ENCODE measurements at regions of chr2 and their contacts with region 1.

Region 1: DNA sequence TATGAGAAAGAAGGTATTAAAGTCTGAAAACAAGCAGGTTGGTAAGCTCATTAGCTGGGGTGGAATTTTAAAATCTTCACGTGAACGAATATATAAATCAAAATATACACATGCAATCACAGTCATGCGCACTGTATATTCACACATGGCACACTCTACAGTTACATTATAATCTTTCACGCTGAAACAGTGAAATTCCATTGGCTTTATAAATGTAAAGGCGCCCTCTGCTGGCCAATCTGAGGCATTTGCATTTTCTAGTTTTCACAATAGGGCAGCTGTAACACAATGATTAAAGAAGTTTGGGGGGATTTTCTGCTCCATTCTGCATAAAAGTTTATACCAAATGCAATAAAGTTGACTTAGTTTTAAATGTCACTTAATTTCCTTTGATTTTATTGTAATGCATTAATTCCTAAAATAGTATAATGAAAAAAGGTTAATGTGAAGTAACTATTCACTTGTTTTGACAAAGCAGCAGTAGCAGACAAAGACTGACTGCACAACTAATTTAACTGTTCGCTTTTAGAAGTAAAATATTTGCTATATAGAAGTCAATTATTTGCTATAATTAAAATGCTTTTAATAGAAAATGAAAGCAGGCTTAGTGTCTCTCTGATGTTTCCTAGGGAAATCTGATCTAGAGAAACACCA is 17.2 kb downstream of the IFIH1 start:
- DNase-seq: peak; percentile 76
- H3K4me3 Mint-ChIP-seq: no peak overlapping the region
- H3K27ac Mint-ChIP-seq: no peak overlapping the region
- H3K4me1 Mint-ChIP-seq: no peaks in the 10 kb centered on the region
- H3K27me3 Mint-ChIP-seq: no peaks in the 10 kb centered on the region
- CTCF ChIP-seq: peak; percentile 65

Region 2: DNA sequence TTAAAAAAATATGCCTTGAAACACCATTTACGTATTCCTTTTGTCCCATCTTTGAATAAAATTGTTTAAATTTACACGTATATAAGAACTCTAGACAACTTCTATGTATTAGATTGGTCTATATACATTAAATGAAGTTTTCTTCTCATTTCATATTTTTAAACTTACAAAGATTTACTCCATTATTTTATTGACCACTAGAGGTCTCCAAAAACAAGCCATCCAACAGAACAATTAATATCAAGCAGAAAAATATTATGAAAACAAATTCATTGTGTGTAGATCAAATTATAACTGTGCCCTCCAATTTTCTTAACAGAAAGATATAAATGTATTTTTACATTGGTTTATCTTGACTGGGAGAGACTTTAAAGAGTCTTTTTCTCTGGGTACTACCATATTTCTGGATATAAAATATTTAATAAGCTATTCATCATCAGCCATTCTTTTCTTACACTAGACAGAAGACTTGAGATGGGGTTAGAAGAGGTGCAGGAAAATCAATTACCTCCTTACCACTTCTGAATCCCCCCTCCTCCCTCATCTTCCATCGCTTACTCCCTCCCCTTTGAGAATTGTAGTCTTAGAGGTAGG is 293.7 kb before region 1 on chr2:
- CTCF ChIA-PET with region 1: interaction called, 3 read pairs
- POLR2A ChIA-PET with region 1: no interaction called
- intact Hi-C with region 1: loop called (anchors 2 kb)
- DNase-seq: no peak
- H3K4me3 Mint-ChIP-seq: no peak overlapping the region
- H3K27ac Mint-ChIP-seq: no peak overlapping the region
- H3K4me1 Mint-ChIP-seq: no peaks in the 10 kb centered on the region
- H3K27me3 Mint-ChIP-seq: peaks cover 22% of the 10 kb centered on the region
- CTCF ChIP-seq: peak; percentile 72

Region 3: DNA sequence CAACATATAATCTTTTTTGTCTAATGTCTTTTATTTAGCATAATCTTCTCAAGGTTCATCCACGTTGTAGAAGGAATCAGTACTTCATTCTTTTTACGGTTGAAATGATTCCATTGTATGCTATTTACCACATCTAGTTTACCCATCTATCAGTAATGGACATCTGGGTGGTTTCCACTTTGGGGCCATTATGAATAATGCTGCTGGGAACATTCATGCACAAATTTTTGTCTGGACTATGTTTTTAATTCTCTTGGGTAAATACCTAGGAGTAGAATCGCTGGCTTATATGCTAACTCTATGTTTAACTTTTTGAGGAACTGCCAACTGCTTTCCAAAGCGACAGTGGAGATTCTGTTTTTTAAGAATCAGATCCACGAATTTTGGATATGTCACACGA is 141.8 kb before region 1 on chr2:
- CTCF ChIA-PET with region 1: interaction called, 253 read pairs
- POLR2A ChIA-PET with region 1: interaction called, 3 read pairs
- intact Hi-C with region 1: no loop called
- DNase-seq: no peak
- H3K4me3 Mint-ChIP-seq: no peak overlapping the region
- H3K27ac Mint-ChIP-seq: no peak overlapping the region
- H3K4me1 Mint-ChIP-seq: no peaks in the 10 kb centered on the region
- H3K27me3 Mint-ChIP-seq: no peaks in the 10 kb centered on the region
- CTCF ChIP-seq: no peak

Region 4: GRCh38 chr2:162261032-162261945 is 40.0 kb before region 1 on chr2:
- CTCF ChIA-PET with region 1: interaction called, 6 read pairs
- POLR2A ChIA-PET with region 1: interaction called, 3 read pairs
- intact Hi-C with region 1: loop called (anchors 1 kb)
- DNase-seq: peak; percentile 65
- H3K4me3 Mint-ChIP-seq: peak overlapping the region; percentile 30
- H3K27ac Mint-ChIP-seq: peak overlapping the region; percentile 69
- H3K4me1 Mint-ChIP-seq: peaks cover 35% of the 10 kb centered on the region
- H3K27me3 Mint-ChIP-seq: no peaks in the 10 kb centered on the region
- CTCF ChIP-seq: no peak

Region 5: DNA sequence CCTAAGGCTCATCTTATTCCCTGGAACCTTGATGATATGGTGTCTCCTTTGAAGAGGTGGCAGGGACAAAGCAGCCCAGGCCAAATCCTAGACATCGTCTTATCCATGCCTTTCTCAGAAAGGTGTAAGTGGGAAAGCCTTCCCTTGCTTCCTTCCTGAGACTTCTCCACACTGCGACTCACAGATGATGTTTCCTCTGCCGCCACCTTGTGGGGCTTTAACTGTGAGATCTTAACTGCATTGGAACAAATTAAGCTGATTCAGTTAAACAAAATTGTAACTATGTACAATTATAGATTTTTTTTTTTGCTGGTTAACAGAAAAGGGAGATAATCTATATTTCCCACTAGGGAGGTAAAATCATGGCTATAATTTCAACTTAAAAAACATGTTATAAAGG is 32.7 kb after region 1 on chr2:
- CTCF ChIA-PET with region 1: interaction called, 11 read pairs
- POLR2A ChIA-PET with region 1: no interaction called
- intact Hi-C with region 1: no loop called
- DNase-seq: peak; percentile 58
- H3K4me3 Mint-ChIP-seq: no peak overlapping the region
- H3K27ac Mint-ChIP-seq: no peak overlapping the region
- H3K4me1 Mint-ChIP-seq: no peaks in the 10 kb centered on the region
- H3K27me3 Mint-ChIP-seq: peaks cover 21% of the 10 kb centered on the region
- CTCF ChIP-seq: peak; percentile 50

Region 6: DNA sequence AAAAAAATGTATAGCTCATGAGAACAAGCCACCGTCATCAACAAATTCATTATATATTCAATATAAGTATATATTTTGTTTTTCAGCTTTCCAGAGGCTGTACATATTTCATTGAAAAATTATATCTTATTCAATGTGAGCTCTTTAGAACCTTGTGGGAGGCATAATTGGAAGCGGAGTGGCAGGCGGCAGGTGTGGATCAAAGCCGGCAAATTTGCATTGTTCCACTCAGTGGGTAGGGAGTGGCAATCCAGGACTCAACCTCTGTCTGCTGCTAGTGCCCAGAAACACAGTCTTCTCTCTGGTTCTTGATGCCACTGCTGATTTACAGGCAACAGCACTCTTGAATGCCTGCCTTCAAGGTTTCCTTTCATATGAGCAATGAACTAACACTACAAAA is 89.5 kb after region 1 on chr2:
- CTCF ChIA-PET with region 1: no interaction called
- POLR2A ChIA-PET with region 1: no interaction called
- intact Hi-C with region 1: no loop called
- DNase-seq: no peak
- H3K4me3 Mint-ChIP-seq: no peak overlapping the region
- H3K27ac Mint-ChIP-seq: no peak overlapping the region
- H3K4me1 Mint-ChIP-seq: no peaks in the 10 kb centered on the region
- H3K27me3 Mint-ChIP-seq: peaks cover 76% of the 10 kb centered on the region
- CTCF ChIP-seq: no peak

Region 7: DNA sequence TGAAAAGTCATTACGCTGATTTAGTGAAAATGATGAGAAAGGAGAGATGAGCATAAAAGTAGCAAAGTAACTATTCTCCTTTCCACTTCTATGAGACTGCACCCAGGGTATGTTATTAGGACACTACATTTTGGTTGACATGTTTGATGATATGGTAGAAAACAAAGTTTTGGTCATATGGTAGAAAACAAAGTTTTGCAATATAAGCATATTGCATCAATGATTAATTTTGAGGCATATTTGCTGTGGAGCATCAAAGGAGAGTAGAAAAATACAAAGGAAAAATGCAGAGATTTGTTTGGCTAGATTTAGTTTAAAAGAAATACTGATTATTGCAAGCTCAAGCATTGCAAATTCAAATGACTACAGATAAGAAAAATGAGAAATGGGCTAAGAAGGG is 355.2 kb after region 1 on chr2:
- CTCF ChIA-PET with region 1: no interaction called
- POLR2A ChIA-PET with region 1: no interaction called
- intact Hi-C with region 1: no loop called
- DNase-seq: no peak
- H3K4me3 Mint-ChIP-seq: no peak overlapping the region
- H3K27ac Mint-ChIP-seq: no peak overlapping the region
- H3K4me1 Mint-ChIP-seq: no peaks in the 10 kb centered on the region
- H3K27me3 Mint-ChIP-seq: peaks cover 56% of the 10 kb centered on the region
- CTCF ChIP-seq: no peak